MCF 10A (cell line): ENCODE measurements at regions of chr21 and their contacts with region 1.

Region 1: GRCh38 chr21:33441489-33442477 is 38.0 kb downstream of the TMEM50B start:
- DNase-seq: peak; percentile 92
- H3K4me3 Mint-ChIP-seq: peak overlapping the region; percentile 7
- H3K27ac Mint-ChIP-seq: peak overlapping the region; percentile 85
- H3K4me1 Mint-ChIP-seq: peaks cover 16% of the 10 kb centered on the region
- H3K27me3 Mint-ChIP-seq: no peaks in the 10 kb centered on the region
- CTCF ChIP-seq: no peak

Region 2: DNA sequence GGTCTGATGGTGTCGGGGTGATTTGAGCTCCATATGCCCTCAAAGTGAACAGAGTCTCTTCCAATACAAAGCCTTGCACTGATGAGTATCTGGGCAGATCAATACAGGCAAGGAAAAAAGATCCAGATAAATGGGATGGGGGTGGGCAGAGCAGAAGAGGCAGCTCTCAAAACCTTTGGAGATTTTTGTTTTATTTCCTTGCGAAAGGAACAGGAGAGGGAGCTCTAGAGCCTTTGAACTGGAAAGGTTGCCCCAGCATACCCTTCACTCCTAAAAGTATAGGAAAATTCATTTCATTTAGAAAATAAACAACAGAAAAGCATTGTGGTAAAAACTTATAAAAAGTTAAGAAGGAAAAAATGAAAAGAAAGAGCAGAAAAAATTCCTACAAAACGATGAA is 447.5 kb before region 1 on chr21:
- CTCF ChIA-PET with region 1: interaction called, 3 read pairs
- POLR2A ChIA-PET with region 1: no interaction called
- intact Hi-C with region 1: loop called (anchors 10 kb)
- DNase-seq: peak; percentile 40
- H3K4me3 Mint-ChIP-seq: no peak overlapping the region
- H3K27ac Mint-ChIP-seq: no peak overlapping the region
- H3K4me1 Mint-ChIP-seq: peaks cover 7% of the 10 kb centered on the region
- H3K27me3 Mint-ChIP-seq: peaks cover 64% of the 10 kb centered on the region
- CTCF ChIP-seq: peak; percentile 56

Region 3: DNA sequence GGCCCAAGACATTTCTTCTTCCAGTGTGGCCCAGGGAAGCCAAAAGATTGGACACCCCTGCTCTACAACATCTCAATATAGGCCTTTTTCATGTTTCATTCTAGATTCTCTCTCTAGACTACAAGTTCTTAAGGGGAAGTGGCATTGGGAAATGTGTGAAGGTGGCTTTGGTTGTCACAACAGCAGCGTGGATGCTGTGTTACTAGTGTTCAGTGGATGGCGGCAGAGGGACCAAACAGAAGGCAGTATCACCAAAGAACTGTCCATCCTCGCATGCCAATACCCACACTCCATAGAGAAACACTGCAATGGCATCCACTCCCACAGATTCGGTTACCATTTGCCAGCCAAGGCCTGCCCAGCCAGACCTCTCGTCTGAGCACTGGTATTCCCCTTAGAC is 236.3 kb before region 1 on chr21:
- CTCF ChIA-PET with region 1: interaction called, 14 read pairs
- POLR2A ChIA-PET with region 1: interaction called, 10 read pairs
- intact Hi-C with region 1: loop called (anchors 1 kb)
- DNase-seq: no peak
- H3K4me3 Mint-ChIP-seq: no peak overlapping the region
- H3K27ac Mint-ChIP-seq: peak overlapping the region; percentile 98
- H3K4me1 Mint-ChIP-seq: peaks cover 27% of the 10 kb centered on the region
- H3K27me3 Mint-ChIP-seq: no peaks in the 10 kb centered on the region
- CTCF ChIP-seq: no peak

Region 4: DNA sequence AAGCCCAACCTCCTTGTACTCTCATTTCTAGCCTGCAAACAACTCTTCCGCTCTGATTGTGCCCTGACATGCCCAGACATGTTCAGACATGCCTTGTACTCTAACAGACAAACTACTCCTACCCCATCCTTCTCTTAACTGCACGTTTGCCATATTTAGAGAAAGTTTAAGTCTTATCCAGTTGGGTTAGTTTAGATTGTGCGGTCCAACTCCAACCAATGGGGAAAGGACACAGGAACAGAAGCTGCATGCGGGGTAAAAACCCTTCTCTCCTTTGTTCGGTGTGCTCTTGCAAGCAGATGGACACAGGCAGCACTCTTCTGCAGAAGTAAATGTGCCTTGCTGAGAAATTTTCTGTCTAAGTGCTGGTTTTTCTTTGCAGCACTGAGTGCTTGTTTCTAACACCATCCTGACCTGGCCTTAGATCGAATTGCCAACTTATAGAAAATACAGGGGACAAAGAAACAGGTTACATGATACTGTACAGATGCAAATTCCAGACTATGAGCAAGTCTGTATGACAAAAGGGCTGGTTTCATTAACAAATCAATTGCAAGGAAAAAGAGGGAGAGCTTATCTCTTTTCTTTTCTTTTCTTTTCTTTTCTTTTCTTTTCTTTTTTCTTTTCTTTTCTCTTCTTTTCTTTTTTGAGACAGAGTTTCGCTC is 74.3 kb before region 1 on chr21:
- CTCF ChIA-PET with region 1: interaction called, 37 read pairs
- POLR2A ChIA-PET with region 1: interaction called, 5 read pairs
- intact Hi-C with region 1: no loop called
- DNase-seq: peak; percentile 48
- H3K4me3 Mint-ChIP-seq: no peak overlapping the region
- H3K27ac Mint-ChIP-seq: peak overlapping the region; percentile 79
- H3K4me1 Mint-ChIP-seq: peaks cover 6% of the 10 kb centered on the region
- H3K27me3 Mint-ChIP-seq: no peaks in the 10 kb centered on the region
- CTCF ChIP-seq: no peak

Region 5: GRCh38 chr21:33428669-33429068 is 13.1 kb before region 1 on chr21:
- CTCF ChIA-PET with region 1: interaction called, 7 read pairs
- POLR2A ChIA-PET with region 1: interaction called, 15 read pairs
- intact Hi-C with region 1: no loop called
- DNase-seq: peak; percentile 99
- H3K4me3 Mint-ChIP-seq: peak overlapping the region; percentile 60
- H3K27ac Mint-ChIP-seq: peak overlapping the region; percentile 93
- H3K4me1 Mint-ChIP-seq: peaks cover 17% of the 10 kb centered on the region
- H3K27me3 Mint-ChIP-seq: no peaks in the 10 kb centered on the region
- CTCF ChIP-seq: no peak

Region 6: DNA sequence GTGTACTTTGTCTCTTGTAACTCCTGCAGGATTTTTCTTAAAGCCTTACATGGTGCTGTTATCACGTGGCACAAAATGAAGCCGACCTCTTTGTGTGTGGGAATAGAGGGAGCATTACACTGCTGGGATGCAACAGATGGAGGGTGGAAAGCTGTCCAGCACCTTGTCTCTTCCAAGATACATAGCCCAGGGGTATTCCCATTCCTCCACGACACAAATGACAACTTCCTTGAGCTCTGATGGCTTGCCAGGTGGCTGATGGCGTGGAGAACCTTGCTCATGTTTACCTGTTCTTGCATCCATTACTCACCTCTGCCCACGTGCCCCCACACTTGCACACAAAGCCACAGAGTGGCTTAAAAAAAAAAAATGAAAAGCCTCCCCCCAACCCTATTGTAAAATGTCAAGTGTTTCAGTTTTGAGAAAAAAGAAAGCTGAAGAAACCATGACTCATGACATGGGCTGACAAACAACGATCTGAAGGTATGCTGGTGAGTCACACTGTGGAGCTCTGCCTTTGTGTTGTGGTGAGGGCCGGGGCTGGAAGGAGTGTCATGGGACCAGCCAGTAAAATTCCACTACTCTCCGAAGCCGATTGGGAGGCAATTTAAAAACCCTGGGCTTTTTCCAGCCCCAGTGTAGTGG is 505.8 kb after region 1 on chr21:
- CTCF ChIA-PET with region 1: no interaction called
- POLR2A ChIA-PET with region 1: no interaction called
- intact Hi-C with region 1: no loop called
- DNase-seq: peak; percentile 98
- H3K4me3 Mint-ChIP-seq: peak overlapping the region; percentile 74
- H3K27ac Mint-ChIP-seq: peak overlapping the region; percentile 96
- H3K4me1 Mint-ChIP-seq: peaks cover 36% of the 10 kb centered on the region
- H3K27me3 Mint-ChIP-seq: no peaks in the 10 kb centered on the region
- CTCF ChIP-seq: no peak